Posterior vena cava (tissue), 2 donors: ENCODE measurements at regions of chr2 and their contacts with region 1.

Region 1: GRCh38 chr2:52097076-52097475 is 1065.1 kb upstream of the NRXN1 start:
- DNase-seq: no peak

Region 2: DNA sequence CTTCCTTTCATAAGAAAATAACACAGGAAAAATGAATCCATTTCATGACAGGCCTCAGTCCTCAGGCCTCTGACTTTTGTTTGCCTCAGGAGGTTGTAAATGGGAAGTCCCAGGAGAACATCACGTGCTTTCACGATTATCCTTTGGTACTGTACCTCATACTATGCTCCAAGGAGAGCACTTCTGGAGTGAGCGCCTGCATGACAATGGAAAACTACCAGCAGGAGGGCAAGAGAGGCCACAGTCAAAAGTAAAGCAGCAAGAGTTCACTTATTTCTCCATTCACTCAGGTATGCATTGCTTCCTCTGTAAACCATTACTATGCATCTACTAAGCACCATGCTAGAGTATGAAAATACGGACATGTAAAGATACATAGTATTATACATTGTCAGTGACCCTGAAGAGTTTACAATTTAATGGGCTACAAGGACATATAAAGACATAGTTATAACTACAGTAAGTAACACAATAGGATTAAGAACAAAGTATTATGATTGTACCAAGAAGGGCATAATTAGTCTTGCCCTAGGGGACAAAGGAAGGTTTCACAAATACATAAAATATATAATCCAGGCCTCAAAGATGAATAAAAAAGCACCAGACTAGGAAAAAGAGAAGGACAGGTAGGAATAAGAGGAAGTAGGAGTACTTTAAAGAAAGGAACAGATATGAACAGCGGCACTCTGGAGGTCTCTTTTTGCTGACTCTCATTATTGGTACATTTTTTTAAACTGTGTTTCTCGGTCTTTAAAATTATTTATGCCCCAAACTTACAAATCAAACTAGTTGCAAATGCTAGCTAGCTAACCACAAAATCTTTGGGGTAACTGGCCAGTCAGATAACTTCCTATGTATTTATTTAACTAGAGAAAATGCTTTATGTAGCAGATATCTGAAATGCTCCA is 1871.8 kb before region 1 on chr2:
- intact Hi-C with region 1: no loop called
- DNase-seq: no peak

Region 3: GRCh38 chr2:52022006-52022405 is 75.1 kb before region 1 on chr2:
- intact Hi-C with region 1: loop called in 1 of 2 experiments (anchors 2 kb)
- DNase-seq: no peak

Region 4: DNA sequence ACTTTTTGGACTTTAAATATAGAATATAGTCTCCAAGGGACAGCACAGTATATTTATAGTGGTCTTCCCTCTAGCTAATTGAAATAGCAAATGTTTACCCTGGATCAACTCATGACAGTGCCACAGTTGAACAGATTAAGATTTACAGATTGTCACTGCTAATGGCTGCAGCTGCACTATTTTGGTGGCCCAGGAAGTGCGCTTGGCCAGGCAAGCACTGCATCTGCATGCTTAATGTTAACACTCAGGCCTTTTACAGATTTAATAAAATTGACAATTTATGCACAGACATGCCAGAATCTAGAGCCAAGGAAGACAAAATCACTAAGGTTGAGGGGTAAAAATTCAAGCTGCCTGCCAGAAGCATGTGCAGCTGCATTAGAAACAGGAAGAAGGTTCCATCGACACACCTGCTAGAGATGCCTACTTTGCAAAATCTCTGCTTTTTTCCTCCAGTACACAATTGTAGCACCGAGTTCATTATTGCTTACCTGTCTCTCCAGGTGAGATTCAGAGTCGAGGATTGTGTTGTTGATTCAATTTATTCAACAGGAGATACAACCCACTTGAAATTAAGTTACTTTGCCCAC is 22.9 kb before region 1 on chr2:
- intact Hi-C with region 1: no loop called
- DNase-seq: no peak

Region 5: GRCh38 chr2:52238782-52239181 is 141.7 kb after region 1 on chr2:
- intact Hi-C with region 1: no loop called
- DNase-seq: no peak